ENCODE measurements at regions of chr10 and their contacts with region 1.

Region 1: DNA sequence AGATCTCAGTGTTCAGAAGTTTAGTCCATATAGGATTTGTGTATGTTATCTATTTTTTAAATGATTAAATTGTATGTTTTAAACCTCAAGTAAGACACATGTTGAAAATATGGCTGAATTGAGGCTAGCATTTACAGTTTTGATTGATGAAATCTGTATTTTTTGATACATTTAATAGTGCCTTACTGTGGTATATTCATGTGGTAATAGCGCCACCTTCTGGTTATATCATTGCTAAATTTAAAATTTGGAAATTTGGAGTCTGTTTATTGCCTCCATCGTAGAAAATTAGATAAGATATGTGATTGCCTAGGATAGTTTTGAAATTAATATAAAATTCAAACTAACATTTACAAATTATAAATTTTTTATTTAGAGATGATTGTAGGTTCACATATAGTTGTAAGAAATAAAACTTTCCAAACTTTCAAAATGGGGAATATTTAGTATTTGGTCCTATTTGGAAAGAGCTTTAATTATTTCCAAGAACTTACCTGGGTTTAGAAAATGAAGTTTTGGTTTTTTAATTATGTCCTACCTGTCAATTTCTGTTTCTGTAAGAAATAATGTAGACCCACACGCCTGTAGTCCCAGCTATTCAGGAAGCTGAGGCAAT is 19.1 kb upstream of the ARMS2 start:
- DNase-seq: no peak
- H3K4me3 ChIP-seq: no peak overlapping the region
- CTCF ChIP-seq: no peak

Region 2: DNA sequence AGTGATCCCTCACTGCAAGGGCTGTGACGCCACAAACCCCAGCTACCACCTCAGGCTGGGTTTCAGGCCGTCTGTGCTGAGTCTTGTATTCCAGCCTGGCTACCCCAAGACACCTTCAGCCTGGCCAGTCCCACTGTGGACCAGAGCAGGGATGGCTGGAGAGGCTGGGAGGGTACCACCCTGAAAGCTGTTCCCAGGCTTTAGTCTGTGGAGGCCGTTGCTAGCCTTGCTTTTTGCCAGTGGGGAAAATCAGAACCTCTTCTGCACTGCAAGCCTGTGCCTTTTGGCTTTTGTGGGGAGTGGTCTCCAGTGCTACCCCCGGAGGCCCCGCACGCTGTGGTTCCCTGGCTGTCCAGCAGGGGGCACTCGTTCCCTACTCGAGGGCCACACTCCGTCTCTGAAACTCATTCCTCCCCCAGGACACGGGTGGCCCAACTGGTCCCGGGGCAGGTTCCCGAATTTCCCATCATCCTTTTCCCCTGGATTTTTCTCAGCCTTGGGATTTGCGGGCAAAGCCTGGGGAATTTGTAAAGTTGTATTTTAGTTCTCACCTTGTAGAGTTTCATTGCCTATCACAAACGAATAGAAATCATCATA is 292.6 kb before region 1 on chr10:
- CTCF ChIA-PET with region 1: interaction called, 16 read pairs
- POLR2A ChIA-PET with region 1: no interaction called
- DNase-seq: no peak
- H3K4me3 ChIP-seq: no peak overlapping the region
- CTCF ChIP-seq: peak; percentile 94

Region 3: GRCh38 chr10:122279725-122280141 is 155.6 kb before region 1 on chr10:
- CTCF ChIA-PET with region 1: interaction called, 45 read pairs
- POLR2A ChIA-PET with region 1: no interaction called
- DNase-seq: no peak
- H3K4me3 ChIP-seq: no peak overlapping the region
- CTCF ChIP-seq: peak; percentile 73

Region 4: GRCh38 chr10:122307669-122308486 is 127.4 kb before region 1 on chr10:
- CTCF ChIA-PET with region 1: interaction called, 89 read pairs
- POLR2A ChIA-PET with region 1: no interaction called
- DNase-seq: peak; percentile 94
- H3K4me3 ChIP-seq: peak overlapping the region; percentile 0
- CTCF ChIP-seq: no peak

Region 5: DNA sequence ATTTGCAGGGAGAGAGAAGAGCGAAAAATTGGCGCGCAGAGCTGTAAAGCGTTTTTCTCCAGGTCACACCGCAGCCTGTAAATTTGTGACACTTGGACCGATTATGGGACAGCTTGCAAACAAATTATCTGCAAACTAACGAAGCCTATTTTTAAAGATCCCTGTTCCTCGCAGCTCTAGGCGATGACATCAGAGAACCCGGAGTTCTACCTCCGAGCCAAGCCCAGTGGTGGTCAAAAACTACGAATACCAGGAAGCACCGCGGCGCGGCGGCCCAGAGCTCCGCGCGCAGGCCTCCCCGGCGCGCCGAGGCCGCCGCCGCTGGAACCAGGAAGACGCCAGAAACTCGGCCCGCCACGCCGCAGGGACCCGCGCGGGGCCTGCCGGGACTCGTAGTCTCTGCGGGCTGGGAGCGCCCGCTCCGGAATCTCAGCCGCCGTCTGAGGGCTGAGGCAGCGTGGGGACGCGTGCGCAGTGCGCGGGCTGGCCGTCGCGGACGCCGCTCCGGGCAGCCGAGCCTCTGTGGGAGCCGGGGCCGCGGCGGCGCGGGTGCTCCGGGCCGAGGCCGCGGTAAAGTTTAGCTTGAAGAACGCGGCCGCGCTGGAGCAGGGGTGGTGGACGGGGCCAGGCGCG is 61.0 kb before region 1 on chr10 and contains the start of gene PLEKHA1:
- CTCF ChIA-PET with region 1: interaction called, 16 read pairs
- POLR2A ChIA-PET with region 1: no interaction called
- DNase-seq: peak; percentile 47
- H3K4me3 ChIP-seq: peak within 1 kb of the TSS; percentile 78
- CTCF ChIP-seq: no peak

Region 6: GRCh38 chr10:122419876-122420623 is 15.3 kb before region 1 on chr10:
- CTCF ChIA-PET with region 1: interaction called, 53 read pairs
- POLR2A ChIA-PET with region 1: interaction called, 3 read pairs
- DNase-seq: no peak
- H3K4me3 ChIP-seq: no peak overlapping the region
- CTCF ChIP-seq: no peak

Region 7: DNA sequence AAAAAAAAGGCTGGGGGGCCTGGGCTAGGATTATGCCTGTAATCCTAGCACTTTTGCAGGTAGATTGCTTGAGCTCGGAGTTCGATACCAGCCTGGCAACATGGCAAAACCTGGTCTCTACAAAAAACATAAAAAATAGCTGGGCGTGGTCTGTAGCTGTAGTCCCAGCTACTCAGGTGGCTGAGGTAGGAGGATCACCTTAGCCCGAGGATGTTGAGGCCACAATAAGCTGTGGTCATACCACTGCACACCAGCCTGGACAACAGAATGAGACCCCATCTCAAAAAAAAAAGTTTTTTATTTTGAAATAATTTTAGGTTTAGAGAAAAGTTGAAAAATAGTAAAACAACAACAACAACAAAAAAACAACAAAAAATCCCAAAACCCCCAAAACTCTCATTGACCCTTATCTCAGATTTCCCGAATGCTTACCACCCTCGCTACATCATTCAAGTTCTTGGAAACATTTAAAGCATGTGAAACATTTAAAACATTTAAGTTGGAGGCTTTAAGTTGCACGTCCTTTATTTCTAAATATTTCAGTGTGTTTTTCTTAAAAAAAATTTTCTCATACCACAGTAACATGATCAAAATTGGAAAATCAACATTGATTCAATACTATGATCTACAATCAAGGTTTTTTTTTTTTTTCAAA is 18.6 kb after region 1 on chr10:
- CTCF ChIA-PET with region 1: interaction called, 26 read pairs
- POLR2A ChIA-PET with region 1: no interaction called
- DNase-seq: no peak
- H3K4me3 ChIP-seq: no peak overlapping the region
- CTCF ChIP-seq: no peak

Measured in AG04449 (cell line).